A673 (cell line): ENCODE measurements at regions of chr2 and their contacts with region 1.

Region 1: GRCh38 chr2:26739514-26739913 is 24.6 kb upstream of the SLC35F6 start:
- DNase-seq: no peak
- H3K4me3 ChIP-seq: no peak overlapping the region
- H3K27ac ChIP-seq: no peak overlapping the region
- H3K4me1 ChIP-seq: no peaks in the 10 kb centered on the region
- H3K27me3 ChIP-seq: no peaks in the 10 kb centered on the region
- CTCF ChIP-seq: no peak

Region 2: GRCh38 chr2:26605195-26605998 is 134.1 kb before region 1 on chr2:
- CTCF ChIA-PET with region 1: interaction called, 22 read pairs
- POLR2A ChIA-PET with region 1: no interaction called
- intact Hi-C with region 1: no loop called
- DNase-seq: peak; percentile 62
- H3K4me3 ChIP-seq: no peak overlapping the region
- H3K27ac ChIP-seq: no peak overlapping the region
- H3K4me1 ChIP-seq: no peaks in the 10 kb centered on the region
- H3K27me3 ChIP-seq: no peaks in the 10 kb centered on the region
- CTCF ChIP-seq: peak; percentile 92